ENCODE measurements at regions of chr15 and their contacts with region 1.

Region 1: DNA sequence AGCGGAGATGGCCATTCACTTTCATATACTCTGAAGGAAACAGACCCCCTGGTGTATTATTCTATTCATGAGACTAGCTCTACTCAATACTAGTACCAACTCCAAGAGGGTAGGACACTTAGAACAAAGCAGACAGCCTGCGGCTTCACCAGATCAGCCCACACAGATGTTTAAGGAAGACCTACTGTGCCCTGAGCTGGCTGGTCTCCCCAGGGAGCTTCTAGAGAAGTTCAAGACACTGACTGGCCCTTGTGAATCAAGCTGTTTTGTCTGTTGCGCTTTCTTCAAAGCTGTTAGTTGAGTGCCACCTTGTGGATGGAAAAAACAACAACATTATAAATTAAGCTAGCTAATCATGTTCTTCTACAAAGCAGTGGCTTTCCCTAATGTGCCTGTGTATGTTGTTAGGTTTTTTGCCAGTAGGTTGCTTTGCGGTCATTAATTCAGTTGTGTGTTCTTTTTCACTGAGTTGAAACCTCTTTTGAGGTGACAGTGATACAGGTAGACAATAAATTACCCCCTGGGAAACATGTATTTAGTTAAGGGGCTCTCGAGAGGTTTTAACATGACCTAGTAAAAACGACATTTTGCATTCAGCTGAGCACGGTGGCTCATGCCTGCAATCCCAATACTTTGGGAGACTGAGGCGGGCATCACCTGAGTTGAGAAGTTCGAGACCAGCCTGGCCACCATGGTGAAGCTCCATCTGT is 64.2 kb upstream of the MYZAP start:
- DNase-seq: peak; percentile 64 to 89
- ATAC-seq: peak; percentile 80 to 89
- H3K4me3 ChIP-seq: no peak overlapping the region
- H3K27ac ChIP-seq: peak overlapping the region in 1 of 2 experiments; percentile 14; a peak in 1 of 6 replicates
- H3K4me1 ChIP-seq: peaks cover 4% of the 10 kb centered on the region; the same call in 2 of the 3 replicates
- CTCF ChIP-seq: peak; percentile 96
- EP300 ChIP-seq: no peak
- POLR2A ChIP-seq: no peak
- RAD21 ChIP-seq: peak; percentile 98 to 99

Region 2: DNA sequence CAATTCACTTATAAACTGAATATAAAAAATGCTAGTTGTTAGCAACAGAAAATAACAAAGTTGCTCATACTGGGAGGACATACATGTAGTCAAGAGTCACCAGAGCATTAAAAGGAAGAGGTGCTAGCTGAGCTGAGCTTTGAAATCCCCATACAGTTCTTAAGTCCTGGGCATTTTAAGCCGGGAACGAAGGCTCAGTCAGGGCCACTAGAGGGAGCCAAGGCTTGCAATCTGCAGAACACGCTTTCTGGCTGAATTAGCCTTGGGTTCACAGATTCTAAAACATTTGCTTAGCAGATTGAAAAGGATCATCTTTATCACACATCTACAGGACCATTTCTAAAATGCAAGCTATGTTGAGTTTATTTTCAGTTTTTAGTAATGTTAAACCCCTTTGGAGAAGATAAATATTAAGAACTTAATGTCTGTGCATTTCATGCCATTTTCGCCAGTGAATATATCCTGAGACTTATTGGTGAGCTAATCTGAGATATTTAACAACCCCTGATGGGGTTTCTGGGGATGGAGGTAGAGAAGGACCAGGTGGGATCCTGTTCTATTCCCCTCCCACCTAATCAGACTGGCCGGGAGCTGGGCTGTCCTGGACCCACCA is 1036.3 kb before region 1 on chr15:
- CTCF ChIA-PET with region 1: interaction called, 12 read pairs
- POLR2A ChIA-PET with region 1: no interaction called
- DNase-seq: peak; percentile 84 to 89
- ATAC-seq: peak; percentile 83 to 93
- H3K4me3 ChIP-seq: no peak overlapping the region
- H3K27ac ChIP-seq: no peak overlapping the region
- H3K4me1 ChIP-seq: 0 out of 3 replicates have a peak, but pooled peaks cover 3% of the 10 kb centered on the region
- CTCF ChIP-seq: peak; percentile 93
- EP300 ChIP-seq: no peak
- POLR2A ChIP-seq: no peak
- RAD21 ChIP-seq: peak; percentile 77 to 83

Region 3: DNA sequence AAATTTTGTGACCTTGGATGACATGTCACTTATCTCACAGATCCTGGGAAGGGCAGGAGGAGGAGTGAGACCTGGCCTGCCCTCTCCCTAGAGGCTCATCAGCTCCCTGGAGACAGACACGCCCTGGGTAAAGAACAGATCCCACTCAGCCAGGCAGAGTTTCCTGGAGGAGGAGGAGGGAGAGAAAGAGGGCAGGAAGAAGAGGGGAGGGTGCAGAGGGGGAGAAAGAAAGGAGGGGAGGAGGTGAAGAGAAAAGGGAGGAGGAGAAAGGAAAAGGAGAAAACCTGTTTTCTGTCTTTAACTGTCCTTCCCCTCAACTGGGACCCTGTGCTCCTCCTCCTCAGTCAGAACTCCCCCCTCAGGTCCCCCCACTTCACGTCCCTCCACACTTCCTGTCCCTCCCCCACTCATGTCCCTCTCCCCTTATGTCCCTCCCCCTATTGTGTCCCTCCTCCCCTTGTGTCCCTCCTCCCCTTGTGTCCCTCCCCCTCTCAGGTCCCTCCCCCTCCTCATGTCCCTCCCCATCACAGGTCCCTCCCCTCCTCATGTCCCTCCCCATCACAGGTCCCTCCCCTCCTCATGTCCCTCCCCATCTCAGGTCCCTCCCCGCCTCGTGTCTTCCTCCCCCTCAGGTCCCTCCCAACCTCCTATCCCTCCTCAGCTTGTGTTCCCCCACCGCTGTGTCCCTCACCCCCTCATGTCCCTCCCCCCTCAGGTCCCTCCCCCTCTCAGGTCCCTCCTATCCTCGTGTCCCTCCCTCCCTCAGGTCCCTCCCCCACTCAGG is 203.5 kb before region 1 on chr15:
- CTCF ChIA-PET with region 1: interaction called, 17 read pairs
- POLR2A ChIA-PET with region 1: no interaction called
- DNase-seq: peak; percentile 96 to 98
- ATAC-seq: peak; percentile 85 to 94
- H3K4me3 ChIP-seq: peak overlapping the region; percentile 32
- H3K27ac ChIP-seq: peak overlapping the region; percentile 91 to 95
- H3K4me1 ChIP-seq: peaks cover 31% of the 10 kb centered on the region
- CTCF ChIP-seq: no peak
- EP300 ChIP-seq: no peak
- POLR2A ChIP-seq: no peak
- RAD21 ChIP-seq: no peak

Region 4: DNA sequence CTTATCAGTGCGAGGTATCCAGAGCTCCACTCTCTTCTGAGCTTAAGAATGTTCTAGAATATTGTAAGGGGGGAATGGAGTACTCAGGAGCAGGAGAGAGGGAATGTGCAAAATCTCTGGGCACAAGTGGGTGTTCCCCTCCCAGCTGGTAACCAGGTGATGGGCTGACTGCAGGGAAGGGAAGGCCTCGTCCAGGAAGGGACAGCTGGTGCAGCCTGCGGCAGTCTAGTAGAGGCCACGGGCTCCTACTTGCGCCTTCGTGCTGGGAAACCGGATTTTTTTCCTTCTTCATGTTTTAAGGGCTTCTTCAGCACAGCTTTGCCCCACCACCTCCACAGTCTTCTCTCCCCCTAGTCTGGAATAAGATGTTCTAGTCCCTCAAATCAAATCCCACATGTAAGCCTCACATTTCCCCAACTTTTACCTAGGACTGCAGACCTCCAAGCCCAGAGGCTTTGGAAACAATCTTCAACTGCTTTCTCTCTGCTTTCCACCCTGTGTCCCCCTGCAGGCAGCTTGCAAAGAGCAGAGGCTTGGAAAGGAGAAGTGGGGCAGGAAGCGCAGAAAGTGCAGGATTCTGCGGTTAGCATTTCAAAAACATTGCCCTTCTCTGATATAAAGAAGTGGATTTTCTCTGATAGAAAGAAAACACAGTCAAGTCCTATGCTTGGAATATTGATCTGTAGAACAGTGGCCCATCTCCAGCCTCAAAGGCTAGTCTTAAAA is 163.1 kb before region 1 on chr15:
- CTCF ChIA-PET with region 1: interaction called, 24 read pairs
- POLR2A ChIA-PET with region 1: no interaction called
- DNase-seq: no peak
- ATAC-seq: peak; percentile 66 to 69; a peak in 4 of 6 replicates
- H3K4me3 ChIP-seq: no peak overlapping the region
- H3K27ac ChIP-seq: no peak overlapping the region
- H3K4me1 ChIP-seq: no peaks in the 10 kb centered on the region
- CTCF ChIP-seq: no peak
- EP300 ChIP-seq: no peak
- POLR2A ChIP-seq: no peak
- RAD21 ChIP-seq: no peak

Region 5: DNA sequence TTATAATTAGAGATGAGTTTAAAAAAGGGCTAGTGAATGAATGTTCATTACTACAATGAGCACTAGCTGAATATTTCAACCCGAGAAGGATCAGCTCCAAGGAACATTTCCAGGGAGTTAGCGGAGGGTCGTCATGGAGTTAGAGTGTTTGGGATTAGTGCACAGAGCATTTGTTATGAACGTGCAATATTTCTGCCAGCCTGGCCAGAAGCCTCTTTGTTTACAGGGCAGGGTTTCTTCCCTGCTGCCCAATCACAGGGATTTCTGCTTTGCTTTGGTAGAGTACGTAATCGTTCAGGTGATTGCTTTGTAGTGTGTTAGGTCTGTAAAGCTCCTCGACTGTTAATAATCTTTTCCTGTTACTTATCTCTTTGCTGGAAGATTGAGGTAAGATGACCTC is 145.3 kb before region 1 on chr15:
- CTCF ChIA-PET with region 1: interaction called, 50 read pairs
- POLR2A ChIA-PET with region 1: interaction called, 3 read pairs
- DNase-seq: no peak
- ATAC-seq: no peak
- H3K4me3 ChIP-seq: no peak overlapping the region
- H3K27ac ChIP-seq: no peak overlapping the region
- H3K4me1 ChIP-seq: peaks cover 20% of the 10 kb centered on the region
- CTCF ChIP-seq: no peak
- EP300 ChIP-seq: no peak
- POLR2A ChIP-seq: no peak
- RAD21 ChIP-seq: no peak

Region 6: DNA sequence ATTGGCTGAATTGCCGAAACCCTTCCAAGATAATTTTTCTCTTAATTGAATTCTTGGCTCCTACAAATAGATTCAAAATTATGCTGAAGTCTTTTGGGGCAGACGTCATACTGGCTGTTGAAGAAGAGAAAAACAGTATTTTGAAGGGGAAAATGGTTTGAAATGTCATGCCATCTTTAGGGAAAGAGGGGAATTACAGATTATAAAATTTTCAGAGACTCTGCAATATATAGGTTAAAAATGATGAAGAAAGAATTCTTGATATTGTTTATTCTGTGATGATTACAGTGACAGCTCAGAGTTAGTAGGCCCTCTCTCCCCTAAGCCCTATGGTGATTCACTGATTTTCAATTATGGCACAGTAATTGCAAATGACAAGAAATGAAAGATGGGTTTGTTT is 65.2 kb before region 1 on chr15:
- CTCF ChIA-PET with region 1: interaction called, 22 read pairs
- POLR2A ChIA-PET with region 1: no interaction called
- DNase-seq: no peak
- ATAC-seq: peak; percentile 33 to 51; a peak in 3 of 6 replicates
- H3K4me3 ChIP-seq: no peak overlapping the region
- H3K27ac ChIP-seq: no peak overlapping the region
- H3K4me1 ChIP-seq: 0 out of 3 replicates have a peak, but pooled peaks cover 4% of the 10 kb centered on the region
- CTCF ChIP-seq: peak; percentile 42
- EP300 ChIP-seq: no peak
- POLR2A ChIP-seq: no peak
- RAD21 ChIP-seq: peak; percentile 54 to 57

Region 7: DNA sequence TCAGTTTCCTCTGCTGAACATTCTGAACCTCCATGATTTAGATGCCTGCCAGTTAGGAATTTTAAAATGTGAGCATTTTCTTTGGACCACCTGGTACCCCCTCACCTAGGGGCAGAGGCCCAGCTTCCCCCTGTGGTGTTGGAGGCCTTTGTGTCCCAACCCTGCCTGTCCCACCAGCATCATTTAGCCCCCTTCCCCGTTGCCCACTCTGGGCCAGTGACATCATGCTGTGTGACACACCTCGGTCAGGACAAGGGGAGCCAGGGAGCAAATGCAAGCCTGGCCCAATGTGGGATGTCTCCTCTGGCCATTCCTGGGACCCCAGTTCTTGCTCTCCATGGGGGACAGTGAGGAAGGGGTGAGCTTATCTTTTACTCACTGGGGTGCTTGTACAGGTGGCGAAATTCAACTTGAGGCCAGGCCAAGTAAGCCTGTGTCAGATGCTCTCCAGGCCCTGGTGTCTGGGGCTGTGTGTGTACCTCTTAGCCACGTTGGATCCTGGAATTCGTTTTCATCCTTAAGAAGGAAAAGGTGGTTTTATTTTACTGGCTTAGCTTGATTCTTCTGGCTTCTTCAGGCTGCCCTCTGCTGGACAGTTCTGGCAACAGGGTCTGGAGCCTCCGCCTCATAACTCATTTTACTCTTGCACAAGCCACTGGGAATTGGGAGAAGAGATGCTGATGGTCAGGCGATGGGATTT is 14.4 kb after region 1 on chr15:
- CTCF ChIA-PET with region 1: interaction called, 178 read pairs
- POLR2A ChIA-PET with region 1: no interaction called
- DNase-seq: peak; percentile 74 to 77
- ATAC-seq: peak; percentile 68 to 88
- H3K4me3 ChIP-seq: no peak overlapping the region
- H3K27ac ChIP-seq: no peak overlapping the region
- H3K4me1 ChIP-seq: peaks cover 4% of the 10 kb centered on the region; the same call in 2 of the 3 replicates
- CTCF ChIP-seq: peak; percentile 90
- EP300 ChIP-seq: no peak
- POLR2A ChIP-seq: no peak
- RAD21 ChIP-seq: peak; percentile 75 to 84